Adrenal gland (tissue), 19 donors: ENCODE measurements at regions of chr11 and their contacts with region 1.

Region 1: DNA sequence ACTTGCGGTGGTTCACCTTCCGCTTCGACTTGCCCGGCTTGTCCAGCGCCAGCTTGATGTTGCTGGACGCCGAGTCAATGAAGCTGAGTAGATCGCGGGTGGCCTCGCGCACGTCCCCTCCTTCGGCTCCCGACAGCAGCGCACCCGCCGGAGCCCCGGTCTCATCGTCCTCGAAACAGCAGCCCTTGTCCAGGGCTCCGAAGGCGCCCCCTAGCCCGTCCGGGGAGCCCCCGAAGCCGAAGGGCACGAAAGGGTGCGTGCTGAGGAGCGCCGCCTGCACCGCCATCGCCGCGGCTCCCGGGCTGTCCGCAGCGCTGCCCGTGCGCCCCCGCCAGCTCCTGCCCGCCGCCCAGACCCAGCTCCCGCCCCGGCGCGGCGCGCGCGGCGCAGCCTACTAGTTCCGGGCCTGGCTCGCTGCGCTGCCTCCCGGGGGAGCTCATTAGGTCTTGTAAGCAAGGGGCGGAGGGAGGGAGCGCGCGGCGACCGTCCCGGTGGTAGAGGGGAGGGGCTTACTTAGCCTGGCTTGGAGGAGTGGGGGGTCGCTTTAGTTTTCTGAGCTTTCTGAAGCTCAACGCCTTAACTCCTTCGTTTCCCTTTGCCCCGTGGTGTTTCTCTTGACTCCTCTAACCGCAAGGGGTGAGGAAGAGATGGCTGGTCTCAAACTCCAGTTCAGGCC is at the start of gene FAM181B:
- DNase-seq: peak; percentile 37 to 79 (median 50)
- H3K4me3 ChIP-seq: peak within 1 kb of the TSS in 1 of 4 donors; percentile 78
- H3K27ac ChIP-seq: peak within 1 kb of the TSS in 2 of 5 donors; percentile 63 to 69
- H3K4me1 ChIP-seq: no peaks in the 10 kb centered on the region
- H3K27me3 ChIP-seq: peaks cover 18% of the 10 kb centered on the region
- CTCF ChIP-seq: no peak
- POLR2A ChIP-seq: peak in 1 of 2 donors; percentile 57
- total RNA-seq, gene FAM181B: 0.04 to 2.7 (median 0.61) TPM in 7 of 9 donors, not detected in the others

Region 2: GRCh38 chr11:82845356-82846353 is 112.1 kb after region 1 on chr11:
- intact Hi-C with region 1: loop called in 1 of 2 experiments (anchors 5 kb)
- DNase-seq: no peak
- H3K4me3 ChIP-seq: no peak overlapping the region
- H3K27ac ChIP-seq: no peak overlapping the region
- H3K4me1 ChIP-seq: no peaks in the 10 kb centered on the region
- H3K27me3 ChIP-seq: no peaks in the 10 kb centered on the region
- CTCF ChIP-seq: no peak
- POLR2A ChIP-seq: no peak

Region 3: DNA sequence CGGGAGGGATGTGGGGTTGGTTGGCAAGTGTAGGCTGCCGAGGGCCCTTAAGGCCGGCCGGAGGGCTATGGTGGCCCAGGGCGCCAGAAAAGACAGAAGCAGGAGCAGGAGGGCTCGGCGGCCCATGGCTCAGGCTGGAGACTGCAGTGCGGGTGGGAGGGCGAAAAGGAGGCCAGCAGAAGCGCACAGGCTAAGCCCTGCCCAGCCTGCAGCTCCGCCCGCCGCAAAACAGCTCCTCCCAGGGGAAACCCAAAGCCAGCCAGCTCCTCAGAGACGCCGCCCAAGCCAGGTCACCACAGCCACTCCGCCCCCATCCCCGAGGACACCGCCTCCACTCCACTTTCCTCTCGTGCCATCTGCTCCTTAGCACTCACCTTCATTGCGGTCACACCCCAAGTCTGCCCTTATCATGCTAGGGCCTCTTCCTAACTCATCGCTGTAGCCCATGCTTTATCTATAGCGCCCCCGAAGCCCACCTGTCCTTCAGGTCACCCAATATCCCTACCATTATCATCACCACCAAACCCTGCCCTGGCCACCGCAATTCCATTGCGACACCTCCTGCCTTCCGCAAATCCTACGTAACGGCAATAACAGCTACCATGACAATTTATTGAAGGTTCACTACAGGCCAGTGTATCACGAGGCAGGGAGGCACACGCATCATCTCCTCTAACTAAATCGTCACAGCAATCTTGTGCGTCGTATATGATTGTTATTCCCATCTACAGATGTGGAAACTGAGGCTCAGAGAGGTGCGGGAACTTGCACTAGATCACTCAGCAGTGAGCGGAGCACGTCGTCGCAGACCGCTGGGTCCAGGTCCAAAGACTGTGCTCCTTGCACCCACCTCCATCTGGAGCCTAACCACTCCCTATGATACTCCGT is 166.9 kb after region 1 on chr11 and contains the start of gene PRCP:
- intact Hi-C with region 1: no loop called
- DNase-seq: peak; percentile 94 to 98 (median 97)
- H3K4me3 ChIP-seq: peak within 1 kb of the TSS; percentile 48 to 83 (median 66)
- H3K27ac ChIP-seq: peak within 1 kb of the TSS; percentile 79 to 95 (median 93)
- H3K4me1 ChIP-seq: peaks cover 13 to 29% of the 10 kb centered on the region in 2 donors
- H3K27me3 ChIP-seq: no peaks in the 10 kb centered on the region
- CTCF ChIP-seq: peak in 1 of 6 experiments; percentile 10
- POLR2A ChIP-seq: peak; percentile 86 to 97
- total RNA-seq, gene PRCP: 79.9 to 169 (median 136) TPM